ENCODE measurements at regions of chr3 and their contacts with region 1.

Region 1: DNA sequence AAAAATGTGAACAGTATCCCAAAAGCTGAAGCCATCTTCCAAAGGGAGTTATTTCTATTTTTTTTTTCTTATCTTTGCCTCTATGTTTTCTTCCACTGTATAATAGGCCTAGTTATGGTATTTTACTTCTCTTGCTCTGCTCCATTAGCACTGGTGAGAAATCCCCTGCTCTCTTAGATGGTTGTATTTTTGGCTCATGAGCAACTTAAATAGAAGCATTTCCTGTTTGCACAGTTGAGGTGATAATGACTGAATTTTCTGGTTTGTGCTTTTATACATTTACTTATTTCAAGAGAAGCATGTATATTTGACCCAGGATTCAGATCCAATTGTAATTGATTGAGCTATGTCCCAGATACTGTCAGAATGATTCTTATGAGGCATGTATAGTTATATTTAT is 61.6 kb upstream of the CD200R1L start:
- DNase-seq: peak in 1 of 9 experiments; percentile 18
- ATAC-seq: no peak
- H3K4me3 ChIP-seq: no peak overlapping the region
- H3K4me3 Mint-ChIP-seq: no peak overlapping the region
- H3K27ac ChIP-seq: no peak overlapping the region
- H3K27ac Mint-ChIP-seq: no peak overlapping the region
- H3K4me1 ChIP-seq: no peaks in the 10 kb centered on the region
- H3K4me1 Mint-ChIP-seq: peaks cover 17% of the 10 kb centered on the region
- H3K27me3 ChIP-seq: peaks cover 0 to 2% of the 10 kb centered on the region in 2 experiments
- H3K27me3 Mint-ChIP-seq: no peaks in the 10 kb centered on the region
- CTCF ChIP-seq: no peak

Region 2: GRCh38 chr3:112149136-112149535 is 759.1 kb before region 1 on chr3:
- CTCF ChIA-PET with region 1: no interaction called
- POLR2A ChIA-PET with region 1: no interaction called
- intact Hi-C with region 1: loop called in 1 of 2 experiments (anchors 5 kb)
- DNase-seq: no peak
- ATAC-seq: no peak
- H3K4me3 ChIP-seq: no peak overlapping the region
- H3K4me3 Mint-ChIP-seq: no peak overlapping the region
- H3K27ac ChIP-seq: no peak overlapping the region
- H3K27ac Mint-ChIP-seq: no peak overlapping the region
- H3K4me1 ChIP-seq: no peaks in the 10 kb centered on the region
- H3K4me1 Mint-ChIP-seq: no peaks in the 10 kb centered on the region
- H3K27me3 ChIP-seq: no peaks in the 10 kb centered on the region
- H3K27me3 Mint-ChIP-seq: no peaks in the 10 kb centered on the region
- CTCF ChIP-seq: no peak

Region 3: DNA sequence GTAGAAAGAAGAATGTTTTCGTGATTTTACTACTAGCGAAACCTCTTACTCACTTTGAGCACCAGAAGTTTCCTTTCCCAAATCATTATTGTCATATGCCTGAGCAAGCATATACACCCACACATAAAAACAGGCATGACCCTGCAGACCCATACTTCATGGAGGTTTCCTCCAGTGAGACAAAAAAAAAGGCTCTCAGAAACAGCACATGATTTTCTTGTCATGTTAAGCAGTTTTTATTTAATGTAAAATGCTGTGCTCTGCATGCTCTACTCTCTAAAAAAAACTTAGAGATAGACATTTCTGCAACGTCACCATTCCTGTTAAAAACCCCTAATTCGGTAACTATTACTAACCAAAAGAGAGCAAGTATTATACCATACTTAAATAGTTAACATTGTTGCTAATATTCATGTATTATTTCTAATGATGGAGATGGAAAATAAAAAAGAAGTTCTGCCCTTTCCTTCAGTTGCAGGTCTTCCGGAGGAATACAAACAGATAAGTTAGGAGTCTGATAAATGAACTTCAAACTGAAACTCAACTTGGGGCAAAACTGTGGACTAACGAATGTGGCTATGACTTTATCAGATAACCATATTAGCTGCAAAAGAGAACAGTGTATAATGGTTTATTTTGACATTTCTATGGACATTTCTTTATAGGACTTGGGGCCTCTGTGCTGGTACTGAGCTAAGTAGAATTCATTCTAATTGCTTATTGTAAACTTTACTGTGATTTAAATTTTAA is 50.7 kb after region 1 on chr3:
- CTCF ChIA-PET with region 1: no interaction called
- POLR2A ChIA-PET with region 1: no interaction called
- intact Hi-C with region 1: loop called in 1 of 2 experiments (anchors 5 kb)
- DNase-seq: no peak
- ATAC-seq: no peak
- H3K4me3 ChIP-seq: no peak overlapping the region
- H3K4me3 Mint-ChIP-seq: peak overlapping the region; percentile 57
- H3K27ac ChIP-seq: no peak overlapping the region
- H3K27ac Mint-ChIP-seq: peak overlapping the region; percentile 45
- H3K4me1 ChIP-seq: peaks cover 6% of the 10 kb centered on the region
- H3K4me1 Mint-ChIP-seq: peaks cover 34% of the 10 kb centered on the region
- H3K27me3 ChIP-seq: no peaks in the 10 kb centered on the region
- H3K27me3 Mint-ChIP-seq: no peaks in the 10 kb centered on the region
- CTCF ChIP-seq: no peak

Region 4: GRCh38 chr3:113329757-113330156 is 421.5 kb after region 1 on chr3:
- CTCF ChIA-PET with region 1: no interaction called
- POLR2A ChIA-PET with region 1: no interaction called
- intact Hi-C with region 1: no loop called
- DNase-seq: no peak
- ATAC-seq: no peak
- H3K4me3 ChIP-seq: no peak overlapping the region
- H3K4me3 Mint-ChIP-seq: no peak overlapping the region
- H3K27ac ChIP-seq: no peak overlapping the region
- H3K27ac Mint-ChIP-seq: no peak overlapping the region
- H3K4me1 ChIP-seq: no peaks in the 10 kb centered on the region
- H3K4me1 Mint-ChIP-seq: no peaks in the 10 kb centered on the region
- H3K27me3 ChIP-seq: no peaks in the 10 kb centered on the region
- H3K27me3 Mint-ChIP-seq: no peaks in the 10 kb centered on the region
- CTCF ChIP-seq: no peak

Region 5: DNA sequence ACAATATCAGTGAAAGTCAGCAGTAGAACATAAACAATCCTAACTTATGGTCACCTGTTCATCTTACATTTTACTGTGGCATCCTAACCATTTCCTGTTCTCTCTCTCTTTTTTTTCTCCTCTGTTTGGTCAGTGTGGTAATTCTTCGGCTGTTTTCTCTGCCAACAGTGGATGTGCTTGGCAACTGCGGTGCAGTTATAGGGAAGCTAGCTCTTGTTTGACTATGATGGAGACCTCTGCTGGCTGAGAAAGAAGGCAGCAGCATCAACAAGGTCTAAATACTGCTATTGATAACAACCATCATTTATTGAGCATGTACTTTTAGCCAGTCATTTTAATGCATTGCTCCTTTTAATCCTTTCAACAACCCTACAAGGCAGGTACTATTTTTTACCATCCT is 1271.3 kb after region 1 on chr3:
- CTCF ChIA-PET with region 1: no interaction called
- POLR2A ChIA-PET with region 1: no interaction called
- intact Hi-C with region 1: no loop called
- DNase-seq: peak in 2 of 9 experiments; percentile 32 to 49
- ATAC-seq: no peak
- H3K4me3 ChIP-seq: no peak overlapping the region
- H3K4me3 Mint-ChIP-seq: no peak overlapping the region
- H3K27ac ChIP-seq: no peak overlapping the region
- H3K27ac Mint-ChIP-seq: no peak overlapping the region
- H3K4me1 ChIP-seq: no peaks in the 10 kb centered on the region
- H3K4me1 Mint-ChIP-seq: peaks cover 3% of the 10 kb centered on the region
- H3K27me3 ChIP-seq: no peaks in the 10 kb centered on the region
- H3K27me3 Mint-ChIP-seq: peaks cover 3% of the 10 kb centered on the region
- CTCF ChIP-seq: peak; percentile 23

Measured in CD8-positive, alpha-beta T cell (primary cell).